GM12878 (cell line): ENCODE measurements at regions of chr5 and their contacts with region 1.

Region 1: DNA sequence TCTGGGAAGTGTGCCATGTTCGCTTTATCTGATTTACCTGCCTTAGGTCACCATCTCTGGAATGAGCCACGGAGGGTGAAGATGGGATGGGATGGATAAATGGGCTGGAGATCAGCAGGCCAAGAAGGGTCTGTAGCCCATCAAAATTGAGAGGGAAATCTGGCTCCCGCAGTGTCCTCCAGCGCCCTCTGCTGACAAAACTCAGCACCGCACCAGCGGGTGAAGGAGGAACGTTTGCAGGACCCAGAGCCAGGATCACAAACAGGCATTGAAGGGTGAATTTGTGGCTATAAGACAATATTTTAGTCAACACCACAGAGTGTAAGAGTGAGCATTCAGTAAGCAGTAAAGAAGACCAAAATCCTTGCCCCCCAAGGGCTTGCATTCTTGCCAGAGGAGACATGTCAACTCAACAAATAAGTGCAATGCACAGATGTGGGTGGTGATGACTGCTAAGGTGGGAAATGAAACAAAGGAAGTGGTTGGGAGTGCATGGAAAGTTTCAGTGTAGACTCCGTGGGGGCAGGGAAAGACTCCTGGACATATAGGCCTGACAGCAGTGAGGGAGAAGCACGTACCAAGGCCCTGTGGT is 124.4 kb downstream of the TENT4A start:
- DNase-seq: no peak
- ATAC-seq: peak; percentile 74
- H3K4me3 ChIP-seq: no peak overlapping the region
- H3K27ac ChIP-seq: no peak overlapping the region
- H3K4me1 ChIP-seq: no peaks in the 10 kb centered on the region; the same call in 1 of the 2 replicates
- H3K27me3 ChIP-seq: peaks cover 1 to 9% of the 10 kb centered on the region in 2 experiments; a peak in 3 of 4 replicates
- CTCF ChIP-seq: peak; percentile 78 to 86 (median 84)
- EP300 ChIP-seq: no peak
- POLR2A ChIP-seq: no peak
- RAD21 ChIP-seq: peak; percentile 72

Region 2: DNA sequence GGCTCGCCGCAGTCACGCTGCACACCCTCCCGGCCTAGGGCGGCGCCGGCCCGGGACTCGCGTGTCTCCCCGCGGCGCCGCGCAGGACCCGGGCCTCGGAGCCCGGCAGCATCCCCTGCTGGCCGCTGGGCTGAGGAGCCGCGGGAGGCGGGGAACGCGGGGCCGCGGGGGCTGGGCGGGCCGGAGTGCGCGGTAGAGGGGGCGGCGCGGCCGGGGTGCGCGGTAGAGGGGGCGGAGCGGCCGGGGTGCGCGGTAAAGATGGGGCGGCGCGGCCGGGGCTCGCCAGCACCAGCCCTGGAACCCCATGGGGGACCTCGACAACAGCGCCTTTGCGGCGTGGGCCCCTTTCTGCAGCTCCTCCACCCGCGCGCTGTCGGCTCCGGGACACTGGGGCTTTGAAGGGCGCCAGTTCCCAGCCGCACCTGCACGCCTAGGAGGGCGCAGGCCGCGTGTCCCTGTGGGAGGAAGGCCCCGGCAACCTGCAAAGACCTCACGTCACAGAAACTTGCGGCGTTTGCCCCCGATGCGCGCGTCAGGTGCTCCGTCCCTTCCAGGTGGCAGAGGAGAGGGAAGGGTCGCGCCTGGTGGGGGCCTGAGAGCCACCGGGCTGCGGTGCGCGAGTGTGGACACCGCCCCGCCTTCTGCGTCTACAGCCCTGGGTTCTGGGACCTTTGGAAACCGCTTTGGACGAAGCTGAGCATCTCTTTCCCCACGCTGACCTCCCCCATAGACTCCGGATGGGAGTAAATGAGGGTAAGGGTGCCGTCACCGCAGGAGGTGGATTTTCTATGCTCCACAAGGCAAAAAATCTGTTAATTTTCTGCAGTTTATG is 254.3 kb before region 1 on chr5:
- CTCF ChIA-PET with region 1: no interaction called
- POLR2A ChIA-PET with region 1: no interaction called
- RAD21 ChIA-PET with region 1: no interaction called
- SMC1A ChIA-PET with region 1: no interaction called
- in situ Hi-C with region 1: no loop called
- intact Hi-C with region 1: loop called (anchors 10 kb)
- DNase-seq: no peak
- ATAC-seq: peak; percentile 79
- H3K4me3 ChIP-seq: no peak overlapping the region
- H3K27ac ChIP-seq: no peak overlapping the region
- H3K4me1 ChIP-seq: no peaks in the 10 kb centered on the region
- H3K27me3 ChIP-seq: peaks cover 3 to 4% of the 10 kb centered on the region in 2 experiments; a peak in 3 of 4 replicates
- CTCF ChIP-seq: 0 out of 6 replicates have a peak, but pooled peaks of 2 of the 3 experiments have one; percentile 6 to 10
- EP300 ChIP-seq: no peak
- POLR2A ChIP-seq: no peak
- RAD21 ChIP-seq: peak; percentile 32

Region 3: DNA sequence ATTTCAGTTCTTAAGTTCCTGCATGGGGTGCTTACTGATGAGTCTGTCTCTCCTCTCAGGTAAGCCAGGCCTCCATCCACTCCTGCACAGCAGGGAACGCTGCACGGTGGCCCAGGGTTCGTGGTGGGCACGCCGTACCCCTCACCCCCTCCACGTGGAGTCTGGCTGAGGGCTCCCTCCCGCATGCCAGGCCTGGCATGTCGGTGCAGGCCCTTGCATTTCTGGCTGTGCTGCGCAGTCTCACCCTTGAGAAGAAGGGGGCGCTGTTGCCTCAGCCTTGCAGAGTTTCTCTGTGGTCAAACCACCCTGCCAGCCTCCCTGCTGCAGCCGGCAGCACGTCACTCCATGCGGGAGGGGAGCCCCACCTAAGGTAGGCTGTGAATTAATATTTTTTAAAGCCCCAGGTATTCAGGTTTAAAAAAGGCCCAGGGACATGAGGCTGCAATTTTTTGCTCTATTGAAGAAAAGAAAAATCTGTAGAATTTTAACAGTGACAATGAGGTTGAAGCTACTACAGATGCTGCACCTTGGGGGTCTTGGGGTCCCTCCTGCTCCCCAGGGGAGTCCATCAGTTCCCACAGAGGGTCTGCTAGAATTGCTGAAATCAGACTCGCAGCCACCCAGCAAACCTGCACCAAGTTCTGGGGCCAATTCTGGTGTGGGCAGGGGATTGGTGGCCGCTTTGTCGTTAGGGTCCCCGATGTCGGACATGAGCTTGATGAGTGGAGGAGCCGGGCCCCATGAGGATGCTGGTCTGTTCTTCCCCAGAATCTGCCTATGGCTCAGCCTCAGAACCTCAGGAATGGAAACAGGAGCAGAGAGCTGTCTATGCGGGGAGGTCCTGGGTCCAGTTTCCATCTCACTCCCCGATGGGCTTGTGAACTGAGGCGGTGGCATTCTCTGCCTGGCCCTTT is 71.7 kb before region 1 on chr5:
- CTCF ChIA-PET with region 1: interaction called, 4 read pairs
- POLR2A ChIA-PET with region 1: no interaction called
- RAD21 ChIA-PET with region 1: interaction called, 3 read pairs
- SMC1A ChIA-PET with region 1: interaction called, 3 read pairs
- in situ Hi-C with region 1: no loop called
- intact Hi-C with region 1: loop called (anchors 5 kb)
- DNase-seq: peak; percentile 31
- ATAC-seq: peak; percentile 95
- H3K4me3 ChIP-seq: no peak overlapping the region
- H3K27ac ChIP-seq: no peak overlapping the region
- H3K4me1 ChIP-seq: no peaks in the 10 kb centered on the region
- H3K27me3 ChIP-seq: no peaks in the 10 kb centered on the region
- CTCF ChIP-seq: peak; percentile 65 to 88 (median 84)
- EP300 ChIP-seq: no peak
- POLR2A ChIP-seq: no peak
- RAD21 ChIP-seq: peak; percentile 72

Region 4: DNA sequence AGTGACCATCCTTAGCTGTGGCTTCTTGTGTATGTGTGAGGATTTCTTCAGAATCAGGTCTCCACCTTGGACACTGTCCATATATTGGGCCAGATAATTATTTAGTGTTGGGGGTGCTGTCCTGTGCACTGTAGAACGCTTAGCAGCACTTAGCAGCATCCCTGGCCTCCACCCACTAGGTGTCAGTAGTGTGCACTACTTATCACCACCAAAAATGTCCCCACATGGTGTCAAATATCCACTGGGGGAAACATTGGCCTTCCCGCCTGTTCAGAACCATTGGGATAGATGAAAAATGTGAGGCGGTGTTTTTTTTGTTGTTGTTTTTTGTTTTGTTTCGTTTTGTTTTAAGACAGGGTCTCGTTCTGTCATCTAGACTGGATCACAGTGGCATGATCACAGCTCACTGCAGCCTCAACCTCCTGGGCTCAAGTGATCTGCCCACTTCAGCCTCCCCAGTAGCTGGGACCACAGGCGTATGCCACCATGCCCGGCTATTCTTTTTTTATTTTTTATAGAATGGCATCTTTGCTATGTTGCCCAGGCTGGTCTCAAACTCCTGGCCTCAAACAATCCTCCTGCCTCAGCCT is 56.7 kb before region 1 on chr5:
- CTCF ChIA-PET with region 1: interaction called, 3 read pairs
- POLR2A ChIA-PET with region 1: no interaction called
- RAD21 ChIA-PET with region 1: no interaction called
- SMC1A ChIA-PET with region 1: no interaction called
- in situ Hi-C with region 1: no loop called
- intact Hi-C with region 1: loop called (anchors 1 kb)
- DNase-seq: no peak
- ATAC-seq: peak; percentile 97
- H3K4me3 ChIP-seq: no peak overlapping the region
- H3K27ac ChIP-seq: no peak overlapping the region
- H3K4me1 ChIP-seq: no peaks in the 10 kb centered on the region
- H3K27me3 ChIP-seq: no peaks in the 10 kb centered on the region
- CTCF ChIP-seq: peak; percentile 62 to 72 (median 66)
- EP300 ChIP-seq: no peak
- POLR2A ChIP-seq: no peak
- RAD21 ChIP-seq: peak; percentile 53; the same call in 1 of the 2 replicates

Region 5: GRCh38 chr5:6820851-6821479 is 16.6 kb before region 1 on chr5:
- CTCF ChIA-PET with region 1: interaction called, 6 read pairs
- POLR2A ChIA-PET with region 1: no interaction called
- RAD21 ChIA-PET with region 1: interaction called, 3 read pairs
- SMC1A ChIA-PET with region 1: interaction called, 5 read pairs
- in situ Hi-C with region 1: no loop called
- intact Hi-C with region 1: loop called (anchors 1 kb)
- DNase-seq: no peak
- ATAC-seq: peak; percentile 83
- H3K4me3 ChIP-seq: no peak overlapping the region
- H3K27ac ChIP-seq: no peak overlapping the region
- H3K4me1 ChIP-seq: no peaks in the 10 kb centered on the region
- H3K27me3 ChIP-seq: no peaks in the 10 kb centered on the region
- CTCF ChIP-seq: peak; percentile 53 to 77 (median 68)
- EP300 ChIP-seq: no peak
- POLR2A ChIP-seq: no peak
- RAD21 ChIP-seq: peak; percentile 60